ENCODE measurements at regions of chr1 and their contacts with region 1.

Region 1: DNA sequence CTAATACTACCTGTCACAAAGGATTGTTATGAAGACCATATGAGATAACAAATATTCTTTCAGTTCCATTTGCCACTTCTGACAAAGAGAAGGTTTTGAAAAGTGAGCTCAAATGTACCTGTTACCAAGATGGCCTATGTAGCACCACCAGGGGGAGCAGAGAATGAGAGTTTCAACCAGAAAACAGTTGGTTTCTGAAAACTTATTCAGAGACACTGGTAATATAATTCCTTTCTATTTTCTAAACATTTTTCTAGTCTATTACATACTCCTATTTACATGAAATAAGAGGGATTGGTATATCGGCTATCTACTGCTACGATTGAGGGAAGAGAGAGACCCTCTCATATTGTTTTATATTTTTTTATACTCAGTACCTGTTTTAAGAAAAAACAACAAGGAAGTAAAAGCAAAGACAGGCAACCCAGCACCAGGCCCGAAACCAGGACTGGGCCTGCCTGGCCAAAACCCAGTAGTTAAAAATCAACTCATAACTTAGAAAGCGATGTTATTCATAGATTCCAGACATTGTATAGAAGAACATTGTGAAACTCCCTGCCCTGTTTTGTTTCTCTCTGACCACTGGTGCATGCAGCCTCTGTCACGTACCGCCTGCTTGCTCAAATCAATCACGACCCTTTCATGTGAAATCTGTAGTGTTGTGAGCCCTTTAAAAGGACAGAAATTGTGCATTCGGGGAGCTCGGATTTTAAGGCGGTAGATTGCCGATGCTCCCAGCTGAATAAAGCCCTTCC is 48.3 kb downstream of the IL23R start:
- DNase-seq: peak; percentile 38
- H3K4me3 ChIP-seq: no peak overlapping the region
- H3K27ac ChIP-seq: no peak overlapping the region
- H3K4me1 ChIP-seq: peaks cover 3% of the 10 kb centered on the region
- H3K27me3 ChIP-seq: no peaks in the 10 kb centered on the region
- CTCF ChIP-seq: peak; percentile 54 to 71

Region 2: GRCh38 chr1:66996018-66996682 is 218.4 kb before region 1 on chr1:
- CTCF ChIA-PET with region 1: interaction called, 8 read pairs
- dilution Hi-C with region 1: no loop called
- in situ Hi-C with region 1: no loop called
- intact Hi-C with region 1: loop called (anchors 1 kb)
- DNase-seq: peak; percentile 54
- H3K4me3 ChIP-seq: no peak overlapping the region
- H3K27ac ChIP-seq: no peak overlapping the region
- H3K4me1 ChIP-seq: no peaks in the 10 kb centered on the region
- H3K27me3 ChIP-seq: no peaks in the 10 kb centered on the region
- CTCF ChIP-seq: peak; percentile 86 to 87